IMR-90 (cell line): ENCODE measurements at regions of chr19 and their contacts with region 1.

Region 1: GRCh38 chr19:56080669-56081401 is 40.3 kb downstream of the ZNF787 start:
- DNase-seq: peak; percentile 78
- ATAC-seq: peak; percentile 82
- H3K4me3 ChIP-seq: peak overlapping the region; percentile 40
- H3K27ac ChIP-seq: peak overlapping the region; percentile 40
- H3K4me1 ChIP-seq: peaks cover 4% of the 10 kb centered on the region; the same call in 1 of the 2 replicates
- H3K27me3 ChIP-seq: no peaks in the 10 kb centered on the region
- CTCF ChIP-seq: peak; percentile 69
- POLR2A ChIP-seq: 0 out of 2 replicates have a peak, but pooled peaks have one; percentile 4
- RAD21 ChIP-seq: peak; percentile 74

Region 2: GRCh38 chr19:55973982-55974381 is 106.9 kb before region 1 on chr19:
- CTCF ChIA-PET with region 1: no interaction called
- POLR2A ChIA-PET with region 1: no interaction called
- dilution Hi-C with region 1: no loop called
- in situ Hi-C with region 1: no loop called
- intact Hi-C with region 1: no loop called
- DNase-seq: no peak
- ATAC-seq: no peak
- H3K4me3 ChIP-seq: no peak overlapping the region
- H3K27ac ChIP-seq: no peak overlapping the region
- H3K4me1 ChIP-seq: no peaks in the 10 kb centered on the region
- H3K27me3 ChIP-seq: no peaks in the 10 kb centered on the region
- CTCF ChIP-seq: no peak
- POLR2A ChIP-seq: no peak
- RAD21 ChIP-seq: no peak

Region 3: GRCh38 chr19:56066152-56067023 is 14.4 kb before region 1 on chr19:
- CTCF ChIA-PET with region 1: interaction called, 18 read pairs
- POLR2A ChIA-PET with region 1: no interaction called
- dilution Hi-C with region 1: no loop called
- in situ Hi-C with region 1: no loop called
- intact Hi-C with region 1: no loop called
- DNase-seq: peak; percentile 19
- ATAC-seq: peak; percentile 97
- H3K4me3 ChIP-seq: peak overlapping the region; percentile 10; the same call in 1 of the 2 replicates
- H3K27ac ChIP-seq: no peak overlapping the region
- H3K4me1 ChIP-seq: no peaks in the 10 kb centered on the region
- H3K27me3 ChIP-seq: no peaks in the 10 kb centered on the region; the same call in 1 of the 2 replicates
- CTCF ChIP-seq: peak; percentile 72
- POLR2A ChIP-seq: no peak
- RAD21 ChIP-seq: peak; percentile 67

Region 4: GRCh38 chr19:56121180-56122167 is 40.6 kb after region 1 on chr19 and contains the start of gene ZNF787:
- CTCF ChIA-PET with region 1: no interaction called
- POLR2A ChIA-PET with region 1: no interaction called
- dilution Hi-C with region 1: no loop called
- in situ Hi-C with region 1: no loop called
- intact Hi-C with region 1: loop called (anchors 2 kb)
- DNase-seq: peak; percentile 96
- ATAC-seq: peak; percentile 85
- H3K4me3 ChIP-seq: peak within 1 kb of the TSS; percentile 89
- H3K27ac ChIP-seq: peak within 1 kb of the TSS; percentile 99
- H3K4me1 ChIP-seq: peaks cover 15% of the 10 kb centered on the region
- H3K27me3 ChIP-seq: no peaks in the 10 kb centered on the region
- CTCF ChIP-seq: 0 out of 2 replicates have a peak, but pooled peaks have one; percentile 1
- POLR2A ChIP-seq: peak; percentile 65
- RAD21 ChIP-seq: 0 out of 2 replicates have a peak, but pooled peaks have one; percentile 2
- total RNA-seq, gene ZNF787: 4.8 and 5.6 TPM in 2 replicates

Region 5: DNA sequence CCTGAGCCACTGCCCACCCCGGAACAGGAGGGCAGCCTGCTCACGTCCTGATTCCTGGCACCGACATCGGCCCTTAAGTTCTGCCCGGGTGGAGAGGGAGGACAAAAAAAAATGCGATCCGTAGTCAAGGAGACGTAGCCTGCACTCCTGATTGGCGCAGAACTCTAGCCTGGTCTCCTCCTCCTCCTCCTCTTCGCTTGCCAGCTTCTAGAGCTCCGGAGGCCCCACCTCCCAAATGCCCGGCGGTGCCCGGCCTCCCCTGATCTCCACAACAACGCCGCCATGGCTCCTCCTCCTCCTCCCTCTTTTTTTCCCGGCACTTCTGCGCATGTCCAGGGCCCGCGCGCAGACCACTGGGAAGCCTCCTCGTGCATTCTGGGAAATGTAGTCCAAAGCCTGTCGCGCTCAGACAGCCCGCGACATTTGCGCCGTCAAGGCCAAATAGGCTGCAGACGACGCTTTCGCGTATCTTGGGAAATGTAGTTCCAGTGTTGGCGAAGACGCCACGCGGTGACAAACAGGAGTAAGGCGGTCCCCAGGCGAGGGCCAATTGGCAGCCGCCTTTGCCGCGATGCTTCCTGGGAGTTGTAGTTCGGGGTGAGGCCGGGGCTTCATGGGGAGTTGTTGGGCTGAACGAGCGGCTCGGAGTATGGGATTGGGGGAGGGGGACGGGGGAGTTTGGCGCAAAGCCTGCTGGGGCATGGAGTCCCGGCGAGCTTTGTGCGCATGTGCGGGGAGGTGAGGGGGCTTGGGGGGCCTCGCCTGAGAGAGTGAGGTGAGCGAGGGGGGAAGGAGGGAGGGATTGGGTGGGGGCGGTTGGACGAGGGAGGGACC is 60.0 kb after region 1 on chr19 and contains the start of gene ZNF444:
- CTCF ChIA-PET with region 1: interaction called, 5 read pairs
- POLR2A ChIA-PET with region 1: no interaction called
- dilution Hi-C with region 1: no loop called
- in situ Hi-C with region 1: no loop called
- intact Hi-C with region 1: loop called (anchors 2 kb)
- DNase-seq: peak; percentile 99
- ATAC-seq: peak; percentile 93
- H3K4me3 ChIP-seq: peak within 1 kb of the TSS; percentile 38
- H3K27ac ChIP-seq: peak within 1 kb of the TSS; percentile 73
- H3K4me1 ChIP-seq: no peaks in the 10 kb centered on the region; the same call in 1 of the 2 replicates
- H3K27me3 ChIP-seq: no peaks in the 10 kb centered on the region
- CTCF ChIP-seq: no peak
- POLR2A ChIP-seq: peak; percentile 63; the same call in 1 of the 2 replicates
- RAD21 ChIP-seq: no peak
- total RNA-seq, gene ZNF444: 2.5 and 3.3 TPM in 2 replicates

Region 6: GRCh38 chr19:56170261-56170660 is 89.4 kb after region 1 on chr19:
- CTCF ChIA-PET with region 1: interaction called, 8 read pairs
- POLR2A ChIA-PET with region 1: no interaction called
- dilution Hi-C with region 1: no loop called
- in situ Hi-C with region 1: loop called (anchors 5 kb)
- intact Hi-C with region 1: loop called (anchors 1 kb)
- DNase-seq: peak; percentile 43
- ATAC-seq: no peak
- H3K4me3 ChIP-seq: no peak overlapping the region
- H3K27ac ChIP-seq: no peak overlapping the region
- H3K4me1 ChIP-seq: no peaks in the 10 kb centered on the region
- H3K27me3 ChIP-seq: peaks cover 4% of the 10 kb centered on the region; the same call in 1 of the 2 replicates
- CTCF ChIP-seq: no peak
- POLR2A ChIP-seq: no peak
- RAD21 ChIP-seq: no peak

Region 7: GRCh38 chr19:56252699-56253422 is 172.0 kb after region 1 on chr19:
- CTCF ChIA-PET with region 1: interaction called, 5 read pairs
- POLR2A ChIA-PET with region 1: no interaction called
- dilution Hi-C with region 1: no loop called
- in situ Hi-C with region 1: loop called (anchors 10 kb)
- intact Hi-C with region 1: loop called (anchors 1 kb)
- DNase-seq: peak; percentile 65
- ATAC-seq: peak; percentile 97
- H3K4me3 ChIP-seq: no peak overlapping the region
- H3K27ac ChIP-seq: no peak overlapping the region
- H3K4me1 ChIP-seq: no peaks in the 10 kb centered on the region
- H3K27me3 ChIP-seq: no peaks in the 10 kb centered on the region
- CTCF ChIP-seq: peak; percentile 74
- POLR2A ChIP-seq: no peak
- RAD21 ChIP-seq: peak; percentile 58

Region 8: DNA sequence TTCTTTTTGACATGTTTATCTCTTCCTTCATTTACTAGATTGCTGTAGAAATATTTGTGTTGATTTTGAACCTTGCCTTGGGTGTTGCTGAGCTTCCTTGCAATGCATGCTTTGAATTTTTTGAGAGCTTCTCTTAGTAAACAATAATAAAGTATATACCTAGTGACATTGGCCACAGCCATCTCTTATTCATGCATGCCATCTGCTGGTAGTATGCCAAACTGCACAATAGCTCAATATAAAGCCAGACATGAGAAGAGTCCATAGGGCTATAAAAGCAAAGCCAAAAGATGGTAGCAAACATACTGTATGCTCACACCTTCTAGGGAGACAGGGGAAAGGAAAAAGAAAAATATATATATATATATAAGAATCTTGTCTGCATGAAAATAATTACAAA is 252.7 kb after region 1 on chr19:
- CTCF ChIA-PET with region 1: interaction called, 22 read pairs
- POLR2A ChIA-PET with region 1: no interaction called
- dilution Hi-C with region 1: no loop called
- in situ Hi-C with region 1: no loop called
- intact Hi-C with region 1: loop called (anchors 1 kb)
- DNase-seq: peak; percentile 56
- ATAC-seq: peak; percentile 99
- H3K4me3 ChIP-seq: no peak overlapping the region
- H3K27ac ChIP-seq: no peak overlapping the region
- H3K4me1 ChIP-seq: no peaks in the 10 kb centered on the region
- H3K27me3 ChIP-seq: no peaks in the 10 kb centered on the region
- CTCF ChIP-seq: peak; percentile 74
- POLR2A ChIP-seq: 0 out of 2 replicates have a peak, but pooled peaks have one; percentile 27
- RAD21 ChIP-seq: peak; percentile 87